Uterus (tissue), 4 donors: ENCODE measurements at regions of chr2 and their contacts with region 1.

Region 1: GRCh38 chr2:223797811-223798721 is 39.3 kb downstream of the AP1S3 start:
- DNase-seq: peak in 1 of 2 donors; percentile 20
- H3K4me3 ChIP-seq: no peak overlapping the region
- H3K27ac ChIP-seq: no peak overlapping the region
- H3K4me1 ChIP-seq: no peaks in the 10 kb centered on the region
- H3K27me3 ChIP-seq: no peaks in the 10 kb centered on the region
- CTCF ChIP-seq: peak; percentile 60 to 84 (median 76)
- POLR2A ChIP-seq: no peak

Region 2: DNA sequence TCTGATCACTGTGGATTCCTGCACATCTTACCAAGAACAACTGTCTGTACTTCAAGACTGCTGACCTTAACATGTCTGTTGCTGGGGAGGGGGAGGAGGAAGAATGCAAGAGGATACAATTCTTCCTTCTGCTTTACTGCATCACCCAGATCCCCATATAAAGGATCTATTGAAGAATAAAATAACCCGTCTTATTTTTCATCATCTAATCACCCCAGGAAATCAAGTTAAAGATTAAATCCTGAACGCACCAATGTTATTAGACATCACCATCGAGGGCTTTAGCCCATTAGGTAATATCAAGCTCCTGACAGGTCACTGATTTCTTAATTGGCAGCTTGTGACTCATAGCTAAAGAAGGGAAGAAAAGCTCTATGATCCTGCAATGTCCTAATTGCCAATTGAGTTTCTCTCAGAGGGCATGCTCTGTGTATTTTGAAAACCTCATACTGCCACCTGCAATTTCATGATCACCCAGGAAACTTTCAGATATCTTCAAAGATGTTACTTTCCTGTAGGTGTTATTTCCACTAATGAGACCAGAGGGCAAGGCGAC is 821.5 kb before region 1 on chr2:
- intact Hi-C with region 1: loop called (anchors 10 kb)
- DNase-seq: no peak
- H3K4me3 ChIP-seq: no peak overlapping the region
- H3K27ac ChIP-seq: no peak overlapping the region
- H3K4me1 ChIP-seq: no peaks in the 10 kb centered on the region
- H3K27me3 ChIP-seq: no peaks in the 10 kb centered on the region
- CTCF ChIP-seq: no peak
- POLR2A ChIP-seq: no peak

Region 3: GRCh38 chr2:223580951-223581350 is 217.1 kb before region 1 on chr2:
- intact Hi-C with region 1: no loop called
- DNase-seq: no peak
- H3K4me3 ChIP-seq: no peak overlapping the region
- H3K27ac ChIP-seq: no peak overlapping the region
- H3K4me1 ChIP-seq: no peaks in the 10 kb centered on the region
- H3K27me3 ChIP-seq: no peaks in the 10 kb centered on the region
- CTCF ChIP-seq: no peak
- POLR2A ChIP-seq: no peak

Region 4: DNA sequence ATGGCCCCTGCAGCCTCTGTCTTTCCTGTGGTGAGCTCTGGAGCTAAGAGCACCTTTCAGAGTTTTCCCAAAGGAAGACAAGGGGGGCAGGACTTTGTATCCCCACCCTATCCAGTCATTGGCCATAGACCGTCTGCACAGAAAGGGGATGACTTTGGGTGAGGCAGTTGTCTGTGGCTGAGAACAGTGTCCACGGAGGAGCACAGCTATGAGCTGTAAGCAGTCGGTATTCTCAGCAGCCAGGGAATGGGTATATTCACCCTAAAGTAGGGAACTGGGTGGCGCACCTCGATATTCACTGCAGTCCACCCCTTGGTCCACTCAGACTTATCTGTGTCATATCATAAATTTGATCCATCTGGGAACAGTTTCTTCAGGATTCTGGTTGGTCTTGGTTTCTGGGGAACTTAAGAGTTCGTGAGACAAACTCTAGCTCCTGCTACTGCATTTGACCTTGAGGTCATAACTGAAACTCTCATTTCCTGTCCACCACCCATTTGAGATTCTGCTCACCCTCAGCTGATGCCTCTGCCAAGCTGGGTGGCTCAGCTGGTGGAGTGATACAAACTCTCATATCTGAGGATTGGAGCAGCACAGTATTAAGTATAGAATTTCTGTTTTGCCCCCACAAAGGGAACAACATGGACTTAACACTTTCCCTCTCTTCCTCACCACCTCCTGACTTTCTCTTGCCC is 150.7 kb before region 1 on chr2:
- intact Hi-C with region 1: no loop called
- DNase-seq: no peak
- H3K4me3 ChIP-seq: no peak overlapping the region
- H3K27ac ChIP-seq: no peak overlapping the region
- H3K4me1 ChIP-seq: no peaks in the 10 kb centered on the region
- H3K27me3 ChIP-seq: no peaks in the 10 kb centered on the region
- CTCF ChIP-seq: no peak
- POLR2A ChIP-seq: no peak